Activated T-helper 1 cell treated with anti-CD3 and anti-CD28 coated beads, Interleukin-12 subunit alpha, Interleukin-12 subunit beta, Interleukin-2, Interleukin-4 antibody, amounts not matched to agents 30 ng/mL and 10 ng/mL and 1 ng/mL, durations not matched to agents 14 hours and 24 hours and 36 hours (primary cell): ENCODE measurements at regions of chr15 and their contacts with region 1.

Region 1: GRCh38 chr15:76866716-76867321 is 38.3 kb downstream of the SCAPER start:
- DNase-seq: no peak
- H3K4me3 Mint-ChIP-seq: no peak overlapping the region
- H3K27ac Mint-ChIP-seq: no peak overlapping the region
- H3K4me1 Mint-ChIP-seq: peaks cover 17% of the 10 kb centered on the region
- H3K27me3 Mint-ChIP-seq: peaks cover 4% of the 10 kb centered on the region

Region 2: DNA sequence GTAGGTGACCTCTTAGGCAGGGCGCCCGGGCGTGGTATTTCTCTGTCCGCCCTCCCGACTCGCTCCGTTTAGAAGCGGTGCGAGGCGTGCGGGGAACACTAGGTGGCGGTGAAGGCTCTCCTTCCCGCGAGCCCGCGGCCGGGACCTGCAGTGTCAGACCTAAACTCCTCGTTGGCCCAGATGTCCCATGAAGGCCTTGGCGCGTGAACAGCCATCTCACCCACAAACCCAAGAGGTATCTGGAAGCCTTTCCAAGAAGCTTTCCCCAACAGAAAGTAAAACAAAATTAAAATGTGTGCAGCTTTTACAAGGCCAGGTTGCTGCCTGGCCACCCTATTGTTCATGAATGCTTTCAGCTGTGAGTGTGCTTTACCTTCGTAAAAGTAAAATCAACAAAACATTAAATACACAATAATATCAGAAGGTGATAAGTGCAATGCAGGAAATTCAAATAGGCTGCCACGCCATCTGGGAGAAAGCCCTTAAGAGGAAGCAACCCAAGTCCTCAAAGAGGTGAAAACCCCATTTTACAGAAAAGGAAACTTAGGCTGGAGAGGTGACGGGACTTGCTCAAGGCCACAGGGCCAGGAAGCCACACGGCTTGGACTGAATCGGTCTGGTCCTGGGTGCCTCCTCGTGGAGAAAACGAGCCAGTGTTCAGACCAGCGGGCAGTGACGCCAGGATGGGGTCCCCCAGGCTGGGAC is 675.8 kb before region 1 on chr15:
- intact Hi-C with region 1: loop called (anchors 1 kb)
- DNase-seq: peak; percentile 55
- H3K4me3 Mint-ChIP-seq: peak overlapping the region; percentile 15
- H3K27ac Mint-ChIP-seq: no peak overlapping the region
- H3K4me1 Mint-ChIP-seq: peaks cover 14% of the 10 kb centered on the region
- H3K27me3 Mint-ChIP-seq: peaks cover 19% of the 10 kb centered on the region

Region 3: GRCh38 chr15:76235186-76235826 is 631.5 kb before region 1 on chr15:
- intact Hi-C with region 1: loop called (anchors 1 kb)
- DNase-seq: no peak
- H3K4me3 Mint-ChIP-seq: no peak overlapping the region
- H3K27ac Mint-ChIP-seq: no peak overlapping the region
- H3K4me1 Mint-ChIP-seq: no peaks in the 10 kb centered on the region
- H3K27me3 Mint-ChIP-seq: no peaks in the 10 kb centered on the region

Region 4: GRCh38 chr15:76576523-76577279 is 290.1 kb before region 1 on chr15:
- intact Hi-C with region 1: loop called (anchors 2 kb)
- DNase-seq: no peak
- H3K4me3 Mint-ChIP-seq: no peak overlapping the region
- H3K27ac Mint-ChIP-seq: no peak overlapping the region
- H3K4me1 Mint-ChIP-seq: peaks cover 22% of the 10 kb centered on the region
- H3K27me3 Mint-ChIP-seq: no peaks in the 10 kb centered on the region

Region 5: GRCh38 chr15:76642671-76643070 is 224.1 kb before region 1 on chr15:
- intact Hi-C with region 1: loop called (anchors 2 kb)
- DNase-seq: no peak
- H3K4me3 Mint-ChIP-seq: no peak overlapping the region
- H3K27ac Mint-ChIP-seq: no peak overlapping the region
- H3K4me1 Mint-ChIP-seq: no peaks in the 10 kb centered on the region
- H3K27me3 Mint-ChIP-seq: no peaks in the 10 kb centered on the region

Region 6: GRCh38 chr15:76840830-76841460 is 25.9 kb before region 1 on chr15:
- intact Hi-C with region 1: no loop called
- DNase-seq: no peak
- H3K4me3 Mint-ChIP-seq: no peak overlapping the region
- H3K27ac Mint-ChIP-seq: no peak overlapping the region
- H3K4me1 Mint-ChIP-seq: peaks cover 9% of the 10 kb centered on the region
- H3K27me3 Mint-ChIP-seq: no peaks in the 10 kb centered on the region